ENCODE measurements at regions of chrX and their contacts with region 1.

Region 1: DNA sequence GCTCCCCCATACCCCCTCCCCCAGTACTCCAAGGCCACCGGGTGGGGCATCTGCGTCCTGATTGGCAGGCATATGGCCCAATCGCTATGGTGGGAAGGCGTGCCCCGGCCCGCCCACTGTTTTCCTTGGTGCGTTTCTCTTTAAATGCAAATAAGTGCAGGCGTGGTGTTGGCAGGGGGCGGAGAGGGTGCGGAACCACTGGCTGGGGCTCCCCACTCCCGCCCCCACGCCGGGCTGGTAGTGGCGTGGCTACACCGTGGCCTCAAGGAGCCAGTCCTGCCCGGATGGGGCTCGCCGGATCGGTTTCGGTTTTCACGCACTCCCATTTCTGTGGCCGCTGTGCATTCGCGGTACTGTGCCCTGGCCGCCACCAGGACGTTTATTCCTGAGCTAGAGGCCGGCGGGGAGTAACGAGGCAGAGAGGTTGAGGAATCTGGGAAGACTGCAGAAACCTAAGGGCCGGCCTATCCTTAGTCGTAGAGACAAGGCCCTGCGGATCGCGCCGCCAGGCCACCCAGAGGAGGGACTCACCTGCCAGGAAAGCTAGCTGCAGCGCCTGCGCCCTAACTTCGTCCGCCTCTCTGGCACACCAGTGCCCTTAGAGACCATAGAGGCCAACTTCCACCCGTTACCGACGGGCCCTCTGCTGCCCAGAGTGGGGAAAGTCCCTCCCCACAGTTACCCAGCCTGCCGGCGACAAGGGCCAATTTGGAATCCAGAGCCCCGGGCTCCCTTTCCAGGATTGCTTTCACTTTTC is 405 bp upstream of the AMER1 start:
- DNase-seq: peak; percentile 84
- H3K4me3 Mint-ChIP-seq: peak overlapping the region; percentile 87
- H3K27ac Mint-ChIP-seq: peak overlapping the region; percentile 91
- H3K4me1 Mint-ChIP-seq: peaks cover 8% of the 10 kb centered on the region
- H3K27me3 Mint-ChIP-seq: no peaks in the 10 kb centered on the region

Region 2: DNA sequence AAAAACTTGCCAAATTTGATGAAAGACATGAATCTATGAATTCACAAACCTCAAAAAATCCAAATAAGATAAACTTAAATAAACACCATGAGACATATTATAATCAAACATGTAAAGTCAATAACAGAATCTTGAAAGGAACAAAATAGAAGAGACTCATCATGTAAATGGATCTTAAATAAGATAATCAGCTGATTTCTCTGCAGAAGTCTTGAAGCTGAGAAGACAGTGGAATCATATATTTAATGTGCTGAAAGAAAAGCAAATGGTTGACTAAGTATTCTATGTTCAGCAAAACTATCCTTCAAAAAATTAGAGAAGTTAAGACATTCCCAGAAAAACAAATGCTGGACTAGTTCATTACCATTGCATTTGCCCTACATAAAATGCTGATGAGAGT is 639.1 kb before region 1 on chrX:
- intact Hi-C with region 1: no loop called
- DNase-seq: no peak
- H3K4me3 Mint-ChIP-seq: no peak overlapping the region
- H3K27ac Mint-ChIP-seq: no peak overlapping the region
- H3K4me1 Mint-ChIP-seq: no peaks in the 10 kb centered on the region
- H3K27me3 Mint-ChIP-seq: no peaks in the 10 kb centered on the region

Region 3: GRCh38 chrX:63754860-63755582 is 450.9 kb before region 1 on chrX:
- intact Hi-C with region 1: loop called (anchors 1 kb)
- DNase-seq: peak; percentile 85
- H3K4me3 Mint-ChIP-seq: peak overlapping the region; percentile 95
- H3K27ac Mint-ChIP-seq: peak overlapping the region; percentile 98
- H3K4me1 Mint-ChIP-seq: peaks cover 42% of the 10 kb centered on the region
- H3K27me3 Mint-ChIP-seq: no peaks in the 10 kb centered on the region

Region 4: GRCh38 chrX:63930140-63930539 is 275.8 kb before region 1 on chrX:
- intact Hi-C with region 1: no loop called
- DNase-seq: no peak
- H3K4me3 Mint-ChIP-seq: no peak overlapping the region
- H3K27ac Mint-ChIP-seq: no peak overlapping the region
- H3K4me1 Mint-ChIP-seq: no peaks in the 10 kb centered on the region
- H3K27me3 Mint-ChIP-seq: no peaks in the 10 kb centered on the region

Region 5: GRCh38 chrX:64291123-64291522 is 85.2 kb after region 1 on chrX:
- intact Hi-C with region 1: no loop called
- DNase-seq: no peak
- H3K4me3 Mint-ChIP-seq: no peak overlapping the region
- H3K27ac Mint-ChIP-seq: no peak overlapping the region
- H3K4me1 Mint-ChIP-seq: no peaks in the 10 kb centered on the region
- H3K27me3 Mint-ChIP-seq: no peaks in the 10 kb centered on the region

Region 6: GRCh38 chrX:64394874-64395567 is 189.1 kb after region 1 on chrX and contains the start of gene MTMR8:
- intact Hi-C with region 1: loop called (anchors 5 kb)
- DNase-seq: peak; percentile 70
- H3K4me3 Mint-ChIP-seq: peak within 1 kb of the TSS; percentile 92
- H3K27ac Mint-ChIP-seq: peak within 1 kb of the TSS; percentile 74
- H3K4me1 Mint-ChIP-seq: peaks cover 8% of the 10 kb centered on the region
- H3K27me3 Mint-ChIP-seq: no peaks in the 10 kb centered on the region
- total RNA-seq, gene MTMR8: 4.3 and 4.4 TPM in 2 replicates

Region 7: GRCh38 chrX:64975989-64976672 is 770.2 kb after region 1 on chrX and contains the start of gene ZC4H2:
- intact Hi-C with region 1: loop called (anchors 5 kb)
- DNase-seq: peak; percentile 54
- H3K4me3 Mint-ChIP-seq: peak within 1 kb of the TSS; percentile 93
- H3K27ac Mint-ChIP-seq: peak within 1 kb of the TSS; percentile 61
- H3K4me1 Mint-ChIP-seq: peaks cover 20% of the 10 kb centered on the region
- H3K27me3 Mint-ChIP-seq: no peaks in the 10 kb centered on the region
- total RNA-seq, gene ZC4H2: 8.9 and 9.3 TPM in 2 replicates

Region 8: DNA sequence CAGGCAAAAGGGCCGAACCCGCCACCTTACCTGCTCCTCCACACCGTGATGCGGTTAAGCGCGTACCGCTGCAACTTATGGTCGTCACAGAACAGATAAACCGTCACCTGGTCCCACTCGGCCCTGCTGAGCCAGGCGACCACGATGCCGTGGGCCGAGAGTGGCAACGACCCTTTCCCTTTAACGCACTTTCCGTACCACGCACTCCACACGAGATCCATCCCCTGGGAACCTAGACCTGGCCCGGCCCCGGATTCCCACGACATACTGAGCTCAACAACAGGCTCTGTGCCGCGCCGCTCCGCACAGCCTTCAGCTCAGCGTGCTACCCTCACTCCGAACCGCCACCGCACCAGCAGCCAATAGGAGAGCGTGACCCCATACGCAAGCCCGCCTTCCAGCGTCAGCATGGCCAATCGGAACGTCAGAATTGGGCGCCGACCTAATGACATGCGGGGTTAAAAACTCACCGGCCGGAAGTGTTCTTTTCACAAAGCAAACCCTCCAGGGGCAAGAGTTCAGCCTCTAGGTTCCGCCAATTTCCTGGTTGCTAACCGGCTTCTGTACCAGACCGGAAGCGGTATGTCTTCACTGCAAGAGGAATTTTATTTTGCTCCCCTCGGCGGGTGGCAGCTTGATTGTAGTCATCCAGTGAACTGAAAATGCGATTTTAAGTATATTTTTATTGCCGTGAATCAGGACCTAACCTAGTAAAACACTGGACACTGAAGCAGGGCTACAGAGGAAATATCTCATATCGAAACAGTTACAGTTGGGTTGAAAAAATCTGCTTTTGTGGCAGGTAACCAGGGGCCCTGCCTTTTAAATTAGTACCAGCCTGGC is 1328.8 kb after region 1 on chrX and contains the start of gene LAS1L:
- intact Hi-C with region 1: loop called (anchors 10 kb)
- DNase-seq: peak; percentile 90
- H3K4me3 Mint-ChIP-seq: peak within 1 kb of the TSS; percentile 100
- H3K27ac Mint-ChIP-seq: peak within 1 kb of the TSS; percentile 99
- H3K4me1 Mint-ChIP-seq: peaks cover 11% of the 10 kb centered on the region
- H3K27me3 Mint-ChIP-seq: no peaks in the 10 kb centered on the region
- total RNA-seq, gene LAS1L: 54.0 and 55.9 TPM in 2 replicates